Psoas muscle (tissue), 8 donors: ENCODE measurements at regions of chr22 and their contacts with region 1.

Region 1: DNA sequence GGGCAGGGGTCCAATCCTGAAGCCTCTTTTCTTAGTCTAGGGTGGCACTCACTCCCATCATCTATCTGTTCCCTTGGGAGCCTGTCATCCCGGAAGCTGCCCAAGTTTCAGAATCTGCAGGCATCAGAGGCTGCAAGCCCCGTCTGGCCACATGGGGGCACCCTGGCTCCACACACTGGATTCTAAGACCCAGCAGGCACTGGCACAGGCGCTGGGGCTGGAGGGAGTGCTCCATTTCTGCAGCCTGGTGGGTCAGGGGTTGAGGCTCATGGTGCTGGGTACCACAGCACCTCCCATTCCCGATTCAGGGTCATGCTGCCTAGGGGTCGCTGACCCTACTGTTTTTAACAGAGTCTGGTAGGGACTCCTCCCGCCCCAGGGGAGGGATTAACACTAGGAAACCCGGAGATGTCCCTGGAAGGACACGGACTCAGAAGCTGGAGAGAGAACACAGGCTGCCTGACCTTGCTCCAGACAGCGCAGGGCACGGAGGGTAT is 243.9 kb upstream of the SYN3 start:
- DNase-seq: peak; percentile 81 to 89
- ATAC-seq: peak; percentile 92 to 97 (median 94)
- H3K4me3 ChIP-seq: no peak overlapping the region
- H3K27ac ChIP-seq: no peak overlapping the region
- H3K4me1 ChIP-seq: peaks cover 4% of the 10 kb centered on the region
- H3K27me3 ChIP-seq: no peaks in the 10 kb centered on the region
- CTCF ChIP-seq: peak; percentile 93

Region 2: GRCh38 chr22:33247758-33248157 is 54.3 kb before region 1 on chr22:
- intact Hi-C with region 1: no loop called
- DNase-seq: no peak
- ATAC-seq: no peak
- H3K4me3 ChIP-seq: no peak overlapping the region
- H3K27ac ChIP-seq: no peak overlapping the region
- H3K4me1 ChIP-seq: no peaks in the 10 kb centered on the region
- H3K27me3 ChIP-seq: no peaks in the 10 kb centered on the region
- CTCF ChIP-seq: no peak

Region 3: GRCh38 chr22:33579448-33580093 is 277.5 kb after region 1 on chr22:
- intact Hi-C with region 1: loop called (anchors 1 to 5 kb)
- DNase-seq: peak; percentile 29 to 64
- ATAC-seq: peak; percentile 89 to 92 (median 90)
- H3K4me3 ChIP-seq: no peak overlapping the region
- H3K27ac ChIP-seq: no peak overlapping the region
- H3K4me1 ChIP-seq: no peaks in the 10 kb centered on the region
- H3K27me3 ChIP-seq: no peaks in the 10 kb centered on the region
- CTCF ChIP-seq: peak; percentile 95

Region 4: DNA sequence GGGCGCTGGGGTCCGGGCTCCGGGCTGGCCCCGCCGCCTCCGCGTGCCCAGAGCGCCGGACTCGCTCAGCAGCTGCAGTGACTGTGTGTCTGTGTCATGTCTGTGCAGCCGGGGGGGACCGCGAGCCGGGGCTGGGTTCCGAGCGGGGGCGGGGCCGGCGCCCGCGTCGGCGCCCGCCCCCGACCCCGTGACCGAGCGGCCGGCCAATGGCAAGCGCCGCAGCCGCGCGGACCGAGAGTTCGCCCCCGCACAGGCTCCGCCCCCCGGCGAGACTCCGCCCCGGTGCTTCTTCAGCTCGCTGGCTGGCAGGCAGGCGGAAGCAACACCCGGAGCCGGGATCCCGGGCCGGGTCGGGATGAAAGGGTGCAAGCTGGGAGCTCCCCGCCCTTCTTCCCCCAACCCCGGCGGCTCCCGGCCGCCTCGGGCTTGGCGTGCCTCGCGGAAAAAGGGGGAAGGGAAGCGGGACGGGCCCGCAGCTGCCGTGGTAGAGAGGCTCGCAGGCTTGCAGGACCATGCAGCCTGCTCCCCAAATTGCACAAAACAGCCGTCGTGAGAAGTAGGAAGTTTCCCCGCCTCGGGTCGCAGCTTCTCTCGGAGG is 618.9 kb after region 1 on chr22:
- intact Hi-C with region 1: loop called in 1 of 2 experiments (anchors 5 kb)
- DNase-seq: peak; percentile 99 to 100
- ATAC-seq: peak; percentile 90 to 94 (median 91)
- H3K4me3 ChIP-seq: peak overlapping the region; percentile 69
- H3K27ac ChIP-seq: peak overlapping the region; percentile 42
- H3K4me1 ChIP-seq: peaks cover 37% of the 10 kb centered on the region
- H3K27me3 ChIP-seq: no peaks in the 10 kb centered on the region
- CTCF ChIP-seq: no peak

Region 5: DNA sequence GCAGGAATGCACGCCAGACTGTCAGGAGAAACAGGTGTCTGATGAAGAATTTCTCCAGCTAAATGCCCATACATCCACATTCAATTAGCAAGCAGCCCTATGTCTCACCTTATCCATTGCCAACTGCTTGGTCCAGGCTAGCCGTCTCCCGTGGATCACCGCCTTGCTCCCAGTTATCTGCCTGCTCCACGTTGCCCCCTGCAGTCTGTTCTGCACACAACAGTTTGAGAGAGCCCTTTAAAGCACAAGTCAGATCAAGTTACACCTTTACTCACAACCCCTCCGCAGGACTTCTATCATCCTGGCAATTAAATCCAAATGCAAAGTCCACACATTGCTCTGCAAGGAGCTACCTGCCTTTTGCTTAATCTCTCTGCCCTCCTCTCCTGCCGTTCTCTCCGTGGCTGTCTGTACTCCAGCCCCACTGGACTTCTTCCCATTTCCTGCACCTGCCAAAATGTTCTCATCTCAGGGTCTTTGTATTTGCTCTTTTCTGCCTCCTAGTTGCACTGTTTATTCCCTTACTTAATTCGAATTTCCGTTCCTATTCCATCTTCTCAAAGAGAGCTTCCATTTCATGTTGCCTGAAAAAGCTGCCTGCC is 803.5 kb after region 1 on chr22:
- intact Hi-C with region 1: loop called (anchors 2 to 10 kb)
- DNase-seq: peak; percentile 35 to 63
- ATAC-seq: peak; percentile 69 to 82 (median 81)
- H3K4me3 ChIP-seq: no peak overlapping the region
- H3K27ac ChIP-seq: no peak overlapping the region
- H3K4me1 ChIP-seq: no peaks in the 10 kb centered on the region
- H3K27me3 ChIP-seq: peaks cover 0 to 5% (median 2%) of the 10 kb centered on the region in 3 donors
- CTCF ChIP-seq: peak; percentile 65

Region 6: GRCh38 chr22:34111210-34111824 is 809.2 kb after region 1 on chr22:
- intact Hi-C with region 1: loop called (anchors 2 to 10 kb)
- DNase-seq: no peak
- ATAC-seq: peak; percentile 51 to 75 (median 66)
- H3K4me3 ChIP-seq: no peak overlapping the region
- H3K27ac ChIP-seq: no peak overlapping the region
- H3K4me1 ChIP-seq: no peaks in the 10 kb centered on the region
- H3K27me3 ChIP-seq: peaks cover 0 to 3% (median 2%) of the 10 kb centered on the region in 3 donors
- CTCF ChIP-seq: peak; percentile 66

Region 7: DNA sequence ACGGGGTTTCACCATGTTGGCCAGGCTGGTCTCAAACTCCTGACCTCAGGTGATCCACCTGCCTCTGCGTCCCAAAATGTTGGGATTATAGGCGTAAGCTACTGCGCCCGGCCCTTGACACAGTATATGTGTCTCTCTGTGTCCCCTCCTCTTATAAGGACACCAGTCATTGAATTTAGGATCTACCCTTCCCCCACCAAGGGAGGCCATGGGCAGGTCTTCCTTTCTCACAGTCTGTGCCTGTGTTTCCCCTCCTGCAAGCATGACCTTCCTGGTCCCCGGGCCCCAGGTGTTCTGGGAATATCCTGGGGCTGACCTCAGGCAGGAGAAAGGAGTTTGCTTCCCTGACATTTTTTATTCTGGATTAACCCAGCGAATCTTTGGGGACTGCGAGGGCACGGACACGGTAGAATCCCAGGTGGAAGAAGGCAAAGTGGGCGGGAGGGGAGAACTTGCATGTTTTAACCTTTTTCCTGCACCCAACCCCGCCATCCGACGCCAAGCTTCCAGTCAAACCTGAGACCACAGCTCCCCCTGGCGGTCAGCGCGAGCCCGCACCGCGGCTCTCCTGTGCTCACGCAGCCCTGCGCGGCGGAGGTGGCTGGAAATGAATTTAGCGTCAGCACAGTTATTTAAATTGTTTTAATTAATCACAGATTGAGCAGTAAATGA is 1721.7 kb after region 1 on chr22:
- intact Hi-C with region 1: loop called in 1 of 2 experiments (anchors 10 kb)
- DNase-seq: peak; percentile 41 to 66
- ATAC-seq: no peak
- H3K4me3 ChIP-seq: no peak overlapping the region
- H3K27ac ChIP-seq: no peak overlapping the region
- H3K4me1 ChIP-seq: no peaks in the 10 kb centered on the region
- H3K27me3 ChIP-seq: peaks cover 0 to 6% (median 0%) of the 10 kb centered on the region in 3 donors
- CTCF ChIP-seq: peak; percentile 65